ENCODE measurements at regions of chr16 and their contacts with region 1.

Region 1: GRCh38 chr16:10181196-10182162 is 749 bp downstream of the GRIN2A start:
- DNase-seq: no peak
- H3K4me3 ChIP-seq: no peak overlapping the region
- H3K27me3 ChIP-seq: peaks cover 22% of the 10 kb centered on the region
- CTCF ChIP-seq: peak; percentile 94

Region 2: DNA sequence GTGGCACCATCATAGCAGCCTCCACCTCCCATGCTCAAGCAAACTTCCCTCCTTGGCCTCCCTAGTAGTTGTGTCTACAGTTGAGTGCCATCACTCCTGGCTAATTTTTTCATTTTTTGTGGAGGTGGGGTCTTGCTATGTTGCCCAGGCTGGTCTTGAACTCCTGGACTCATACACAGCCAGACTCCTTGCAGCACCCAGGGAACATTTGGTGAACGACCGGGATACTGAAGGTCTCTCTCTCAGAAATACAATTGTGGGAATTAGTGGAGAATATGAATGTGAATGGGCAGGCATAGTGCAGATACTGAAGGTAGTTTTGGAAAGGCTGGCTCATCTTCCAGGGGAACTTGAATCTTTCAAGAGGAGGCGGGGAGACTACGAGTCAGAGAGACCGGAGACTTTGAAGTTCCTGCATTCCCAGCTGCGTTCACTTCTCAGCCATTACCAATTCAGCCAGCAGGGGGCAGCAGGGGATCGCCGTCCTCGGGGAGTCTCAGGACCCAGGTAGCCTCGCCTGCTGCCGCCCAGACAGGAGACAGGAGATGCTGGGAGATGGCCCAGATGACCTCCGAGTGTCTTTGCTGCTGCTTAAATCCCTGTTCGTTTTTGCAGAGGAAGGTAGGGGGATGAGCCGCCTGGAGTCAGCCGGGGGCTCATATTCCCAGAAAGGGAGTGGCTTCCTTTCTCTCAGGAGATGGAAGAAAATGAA is 1021.5 kb before region 1 on chr16:
- CTCF ChIA-PET with region 1: interaction called, 17 read pairs
- POLR2A ChIA-PET with region 1: no interaction called
- DNase-seq: no peak
- H3K4me3 ChIP-seq: no peak overlapping the region
- H3K27me3 ChIP-seq: no peaks in the 10 kb centered on the region
- CTCF ChIP-seq: peak; percentile 76

Region 3: GRCh38 chr16:9647981-9648712 is 533.3 kb before region 1 on chr16:
- CTCF ChIA-PET with region 1: interaction called, 13 read pairs
- POLR2A ChIA-PET with region 1: no interaction called
- DNase-seq: no peak
- H3K4me3 ChIP-seq: no peak overlapping the region
- H3K27me3 ChIP-seq: no peaks in the 10 kb centered on the region
- CTCF ChIP-seq: peak; percentile 54

Region 4: GRCh38 chr16:10045291-10045775 is 136.1 kb before region 1 on chr16:
- CTCF ChIA-PET with region 1: no interaction called
- POLR2A ChIA-PET with region 1: no interaction called
- DNase-seq: no peak
- H3K4me3 ChIP-seq: no peak overlapping the region
- H3K27me3 ChIP-seq: peaks cover 3% of the 10 kb centered on the region; the same call in 1 of the 2 replicates
- CTCF ChIP-seq: no peak

Measured in BJ (cell line).